Left ventricle myocardium superior (tissue), 1 donor: ENCODE measurements at regions of chr5 and their contacts with region 1.

Region 1: DNA sequence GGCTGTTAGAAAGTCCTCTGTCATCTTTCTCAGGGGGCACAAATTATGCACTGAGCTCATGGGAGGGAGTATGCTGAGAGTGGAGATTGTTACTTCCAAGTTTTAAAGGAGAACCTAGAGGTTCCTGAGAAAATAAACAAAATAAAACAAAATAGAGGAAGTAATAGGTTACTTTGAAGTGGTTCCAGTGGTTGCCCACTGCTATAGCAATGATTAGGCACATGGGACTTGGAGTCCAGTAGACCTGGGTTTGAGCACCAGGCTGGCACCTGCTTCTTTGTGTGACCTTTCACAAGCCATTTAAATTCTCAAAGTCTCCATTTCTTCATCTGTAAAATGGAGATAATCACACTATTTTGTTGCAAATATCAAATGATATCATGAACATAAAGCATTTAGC is 13.8 kb upstream of the CDC23 start:
- DNase-seq: no peak
- ATAC-seq: no peak

Region 2: GRCh38 chr5:138274189-138274853 is 47.4 kb after region 1 on chr5 and contains the start of gene GFRA3:
- intact Hi-C with region 1: loop called (anchors 10 kb)
- DNase-seq: no peak
- ATAC-seq: peak; percentile 43
- total RNA-seq, gene GFRA3: 0.72 TPM

Region 3: GRCh38 chr5:138515556-138516245 is 288.8 kb after region 1 on chr5:
- intact Hi-C with region 1: no loop called
- DNase-seq: no peak
- ATAC-seq: no peak